H1 (cell line): ENCODE measurements at regions of chr11 and their contacts with region 1.

Region 1: DNA sequence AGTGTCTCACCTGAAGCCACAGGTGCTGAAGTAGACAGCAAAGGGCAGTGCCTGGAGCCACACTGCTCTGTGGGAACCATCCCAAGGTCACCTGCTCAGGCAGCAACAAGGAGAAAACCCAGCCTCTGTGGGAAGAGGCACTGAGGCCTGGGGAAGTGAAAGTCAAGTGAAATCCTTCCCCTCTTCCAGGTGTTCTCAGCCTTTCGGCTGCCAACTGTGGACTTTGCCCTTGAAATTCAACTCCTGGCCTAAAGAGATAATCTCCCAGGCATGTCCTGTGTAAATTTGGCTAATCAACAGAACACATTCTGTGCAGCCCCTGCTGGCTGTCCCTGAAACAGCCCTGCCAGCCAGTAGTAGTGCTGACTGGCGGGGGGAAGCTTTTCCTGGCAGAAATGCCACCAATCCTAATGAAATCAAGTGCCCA is 112.1 kb downstream of the RPL27A start:
- DNase-seq: no peak
- H3K4me3 ChIP-seq: no peak overlapping the region
- H3K27ac ChIP-seq: no peak overlapping the region
- H3K4me1 ChIP-seq: peaks cover 0 to 4% (median 0%) of the 10 kb centered on the region in 4 experiments; a peak in 3 of 7 replicates
- H3K27me3 ChIP-seq: no peaks in the 10 kb centered on the region
- CTCF ChIP-seq: peak; percentile 50 to 66 (median 56)
- EP300 ChIP-seq: no peak
- POLR2A ChIP-seq: no peak
- RAD21 ChIP-seq: peak; percentile 39 to 58; a peak in 3 of 4 replicates

Region 2: DNA sequence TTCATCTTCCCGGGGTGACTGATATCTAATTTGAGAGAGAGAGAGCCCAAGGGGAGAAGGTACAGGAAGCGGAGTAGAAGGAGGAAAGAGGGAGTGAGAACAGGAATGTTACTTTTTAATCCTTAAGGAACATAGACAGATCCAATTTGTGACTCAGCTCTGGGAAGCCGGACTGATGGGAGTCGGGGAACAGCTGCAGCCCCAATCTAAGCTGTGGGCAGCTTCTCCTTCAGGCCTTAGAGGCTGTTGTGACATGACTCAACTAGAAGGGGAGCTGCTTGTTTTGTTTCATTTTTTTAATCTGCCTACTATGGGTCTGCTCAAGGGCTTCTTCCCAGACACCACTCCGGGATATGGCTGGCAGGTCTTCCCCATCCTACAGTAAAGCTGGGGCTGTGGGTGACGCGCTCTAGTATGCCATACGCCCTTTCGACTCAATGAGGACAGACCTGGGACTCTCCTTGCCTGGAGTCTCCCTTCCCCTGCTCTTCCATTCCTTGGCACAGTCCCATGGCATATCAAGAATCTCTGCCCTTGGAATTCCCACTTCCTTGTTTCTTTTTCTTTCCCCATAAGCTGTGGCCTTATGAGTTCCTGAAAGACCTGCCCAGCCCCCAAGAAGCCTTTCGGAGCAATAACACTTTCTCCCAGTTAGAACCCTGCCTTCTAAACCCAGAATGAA is 13.0 kb after region 1 on chr11:
- CTCF ChIA-PET with region 1: interaction called, 16 read pairs
- POLR2A ChIA-PET with region 1: interaction called, 4 read pairs
- DNase-seq: no peak
- H3K4me3 ChIP-seq: no peak overlapping the region
- H3K27ac ChIP-seq: no peak overlapping the region
- H3K4me1 ChIP-seq: peaks cover 11 to 18% (median 17%) of the 10 kb centered on the region in 4 experiments; a peak in 6 of 7 replicates
- H3K27me3 ChIP-seq: no peaks in the 10 kb centered on the region
- CTCF ChIP-seq: no peak
- EP300 ChIP-seq: no peak
- POLR2A ChIP-seq: no peak
- RAD21 ChIP-seq: no peak